ENCODE measurements at regions of chr6 and their contacts with region 1.

Region 1: GRCh38 chr6:139028658-139029469 is at the start of gene ABRACL:
- DNase-seq: peak; percentile 93
- ATAC-seq: peak; percentile 85
- H3K4me3 Mint-ChIP-seq: no peak within 1 kb of the TSS
- H3K27ac Mint-ChIP-seq: peak within 1 kb of the TSS; percentile 93
- H3K4me1 Mint-ChIP-seq: peaks cover 23% of the 10 kb centered on the region
- H3K27me3 Mint-ChIP-seq: no peaks in the 10 kb centered on the region
- total RNA-seq, gene ABRACL: 92.5 to 180 TPM

Region 2: DNA sequence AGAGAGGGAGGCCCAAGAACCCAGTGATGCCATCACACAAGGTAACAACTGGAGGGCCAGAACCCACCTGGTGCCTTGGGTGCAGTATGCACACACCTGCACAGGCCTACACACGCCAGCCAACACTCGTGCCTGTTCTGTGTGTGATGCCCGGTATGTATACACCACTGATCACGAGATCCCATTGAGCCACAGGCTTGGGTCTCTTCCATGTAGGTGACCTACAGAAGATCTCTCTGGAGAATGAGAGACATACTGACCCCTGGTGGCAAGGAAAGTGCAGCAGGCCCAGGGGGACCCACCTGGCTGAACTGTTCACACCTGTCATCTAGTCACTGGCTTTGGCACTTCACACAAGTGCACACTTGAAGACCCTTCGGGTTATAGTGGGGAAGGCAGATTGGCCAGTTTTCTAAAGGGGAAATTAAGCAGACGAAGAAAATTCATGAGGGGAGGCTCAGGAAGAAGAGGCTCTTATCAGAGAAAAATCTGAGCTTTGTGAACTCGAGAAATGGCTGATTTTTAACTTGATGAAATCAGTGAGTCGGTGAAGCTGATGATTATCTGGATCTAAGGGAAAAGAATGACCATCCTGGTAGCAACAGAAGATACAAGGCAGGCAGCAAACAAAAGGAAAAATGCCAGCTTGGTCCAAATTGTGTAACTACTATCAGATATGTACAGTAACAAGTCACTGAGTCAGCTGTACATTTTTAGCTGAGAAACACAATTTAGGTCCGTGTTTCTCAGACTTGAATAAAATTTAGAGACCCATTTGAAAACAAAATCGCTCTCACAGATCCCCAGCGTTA is 741.5 kb before region 1 on chr6:
- CTCF ChIA-PET with region 1: no interaction called
- POLR2A ChIA-PET with region 1: no interaction called
- intact Hi-C with region 1: no loop called
- DNase-seq: peak; percentile 70
- ATAC-seq: peak; percentile 63
- H3K4me3 Mint-ChIP-seq: no peak overlapping the region
- H3K27ac Mint-ChIP-seq: no peak overlapping the region
- H3K4me1 Mint-ChIP-seq: peaks cover 3% of the 10 kb centered on the region
- H3K27me3 Mint-ChIP-seq: peaks cover 1% of the 10 kb centered on the region

Region 3: GRCh38 chr6:138817822-138818308 is 211.0 kb before region 1 on chr6:
- CTCF ChIA-PET with region 1: interaction called, 3 read pairs
- POLR2A ChIA-PET with region 1: no interaction called
- intact Hi-C with region 1: loop called (anchors 1 to 5 kb)
- DNase-seq: peak; percentile 43
- ATAC-seq: peak; percentile 75
- H3K4me3 Mint-ChIP-seq: no peak overlapping the region
- H3K27ac Mint-ChIP-seq: peak overlapping the region; percentile 82
- H3K4me1 Mint-ChIP-seq: peaks cover 24% of the 10 kb centered on the region
- H3K27me3 Mint-ChIP-seq: no peaks in the 10 kb centered on the region

Region 4: GRCh38 chr6:139099984-139100383 is 71.1 kb after region 1 on chr6:
- CTCF ChIA-PET with region 1: no interaction called
- POLR2A ChIA-PET with region 1: no interaction called
- intact Hi-C with region 1: loop called in 1 of 2 experiments (anchors 2 kb)
- DNase-seq: peak; percentile 44
- ATAC-seq: peak; percentile 98
- H3K4me3 Mint-ChIP-seq: no peak overlapping the region
- H3K27ac Mint-ChIP-seq: peak overlapping the region; percentile 67
- H3K4me1 Mint-ChIP-seq: peaks cover 26% of the 10 kb centered on the region
- H3K27me3 Mint-ChIP-seq: peaks cover 3% of the 10 kb centered on the region

Region 5: DNA sequence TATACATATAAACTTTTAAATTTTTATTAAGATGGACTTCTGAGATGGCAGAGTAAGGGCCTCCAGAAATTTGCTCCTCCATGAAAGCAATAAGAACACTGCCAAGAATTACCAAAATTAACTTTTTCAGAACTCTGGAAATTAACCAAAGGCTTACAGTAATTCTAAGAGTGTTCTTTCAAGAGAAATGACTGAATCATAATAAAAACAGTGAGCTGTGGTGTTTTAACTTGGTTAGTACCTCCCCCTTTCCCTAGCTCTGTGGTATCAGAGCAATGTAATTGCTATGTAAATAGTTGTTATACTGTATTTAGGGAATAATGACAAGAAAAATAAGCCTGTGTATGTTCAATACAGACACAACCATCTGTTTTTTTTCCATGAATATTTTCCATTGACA is 125.0 kb after region 1 on chr6:
- CTCF ChIA-PET with region 1: no interaction called
- POLR2A ChIA-PET with region 1: no interaction called
- intact Hi-C with region 1: loop called (anchors 5 kb)
- DNase-seq: no peak
- ATAC-seq: peak; percentile 47
- H3K4me3 Mint-ChIP-seq: peak overlapping the region; percentile 30
- H3K27ac Mint-ChIP-seq: peak overlapping the region; percentile 100
- H3K4me1 Mint-ChIP-seq: peaks cover 82% of the 10 kb centered on the region
- H3K27me3 Mint-ChIP-seq: no peaks in the 10 kb centered on the region

Region 6: GRCh38 chr6:139291813-139292619 is 263.2 kb after region 1 on chr6 and contains the start of gene TXLNB:
- CTCF ChIA-PET with region 1: no interaction called
- POLR2A ChIA-PET with region 1: no interaction called
- intact Hi-C with region 1: loop called in 1 of 2 experiments (anchors 2 kb)
- DNase-seq: peak; percentile 92
- ATAC-seq: peak; percentile 94
- H3K4me3 Mint-ChIP-seq: peak within 1 kb of the TSS; percentile 64
- H3K27ac Mint-ChIP-seq: peak within 1 kb of the TSS; percentile 96
- H3K4me1 Mint-ChIP-seq: peaks cover 66% of the 10 kb centered on the region
- H3K27me3 Mint-ChIP-seq: no peaks in the 10 kb centered on the region
- total RNA-seq, gene TXLNB: 0.26 to 0.27 TPM